CD8-positive, alpha-beta memory T cell (primary cell): ENCODE measurements at regions of chr19 and their contacts with region 1.

Region 1: GRCh38 chr19:49113762-49114629 is at the start of gene LIN7B:
- DNase-seq: peak; percentile 72 to 83 (median 82)
- H3K4me3 ChIP-seq: peak within 1 kb of the TSS; percentile 62
- H3K4me3 Mint-ChIP-seq: peak within 1 kb of the TSS; percentile 82 to 91 (median 87)
- H3K27ac ChIP-seq: peak within 1 kb of the TSS; percentile 47
- H3K27ac Mint-ChIP-seq: peak within 1 kb of the TSS; percentile 60 to 93 (median 86)
- H3K4me1 ChIP-seq: peaks cover 18% of the 10 kb centered on the region
- H3K4me1 Mint-ChIP-seq: peaks cover 34 to 47% (median 41%) of the 10 kb centered on the region in 3 donors
- H3K27me3 ChIP-seq: no peaks in the 10 kb centered on the region
- H3K27me3 Mint-ChIP-seq: no peaks in the 10 kb centered on the region
- total RNA-seq, gene LIN7B: 4.0 to 5.1 TPM

Region 2: DNA sequence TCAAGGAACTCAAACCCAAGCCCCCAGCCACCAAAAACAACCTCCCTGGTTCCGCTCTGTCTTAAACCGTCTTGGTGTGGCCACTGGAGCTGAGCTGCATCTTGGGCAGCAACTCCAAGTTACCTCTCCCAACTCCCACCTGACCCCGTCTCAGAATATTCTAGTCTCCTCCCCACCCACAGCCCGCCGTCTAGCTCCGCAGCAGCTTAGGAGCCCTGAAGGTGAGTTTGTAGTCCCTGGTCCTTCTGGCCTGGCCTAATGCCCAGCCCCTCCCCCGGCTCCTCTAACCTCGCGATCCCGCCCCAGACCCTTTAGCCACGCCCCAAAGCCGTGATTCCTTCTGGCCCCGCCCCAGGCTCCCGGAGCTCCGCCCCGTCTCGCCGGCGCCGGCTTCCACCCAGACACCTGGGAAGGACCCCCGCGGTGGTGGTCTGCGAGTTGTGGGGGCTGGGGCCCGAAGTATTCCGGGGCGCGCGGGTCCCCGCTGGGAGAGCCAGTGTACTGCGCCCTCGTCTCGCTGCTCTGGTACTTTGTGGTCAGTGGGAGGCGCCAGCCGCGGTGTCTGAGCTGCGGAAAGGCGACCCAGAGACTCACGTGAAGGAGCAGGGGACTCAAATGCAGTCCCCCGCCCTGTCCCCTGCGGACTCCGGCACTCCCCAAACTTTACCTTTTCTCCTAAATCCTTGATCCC is 94.6 kb before region 1 on chr19:
- CTCF ChIA-PET with region 1: no interaction called
- POLR2A ChIA-PET with region 1: no interaction called
- DNase-seq: peak; percentile 47 to 74 (median 61)
- H3K4me3 ChIP-seq: peak overlapping the region; percentile 61
- H3K4me3 Mint-ChIP-seq: peak overlapping the region; percentile 77 to 94 (median 89)
- H3K27ac ChIP-seq: no peak overlapping the region
- H3K27ac Mint-ChIP-seq: peak overlapping the region in 6 of 8 donors; percentile 40 to 93 (median 84)
- H3K4me1 ChIP-seq: peaks cover 6% of the 10 kb centered on the region
- H3K4me1 Mint-ChIP-seq: peaks cover 21 to 42% (median 23%) of the 10 kb centered on the region in 3 donors
- H3K27me3 ChIP-seq: no peaks in the 10 kb centered on the region
- H3K27me3 Mint-ChIP-seq: no peaks in the 10 kb centered on the region

Region 3: GRCh38 chr19:49133621-49134454 is 19.8 kb after region 1 on chr19:
- CTCF ChIA-PET with region 1: interaction called, 16 read pairs
- POLR2A ChIA-PET with region 1: interaction called, 15 read pairs
- DNase-seq: peak in 3 of 5 donors; percentile 27 to 52 (median 30)
- H3K4me3 ChIP-seq: no peak overlapping the region
- H3K4me3 Mint-ChIP-seq: peak overlapping the region in 6 of 7 donors; percentile 50 to 85 (median 69)
- H3K27ac ChIP-seq: no peak overlapping the region
- H3K27ac Mint-ChIP-seq: peak overlapping the region in 1 of 8 donors; percentile 67
- H3K4me1 ChIP-seq: peaks cover 8% of the 10 kb centered on the region
- H3K4me1 Mint-ChIP-seq: peaks cover 8 to 20% (median 13%) of the 10 kb centered on the region in 3 donors
- H3K27me3 ChIP-seq: no peaks in the 10 kb centered on the region
- H3K27me3 Mint-ChIP-seq: peaks cover 10% of the 10 kb centered on the region in 2 donors